ENCODE measurements at regions of chr17 and their contacts with region 1.

Region 1: GRCh38 chr17:42937712-42938596 is 26.3 kb downstream of the AARSD1 start:
- DNase-seq: peak; percentile 69
- H3K4me3 Mint-ChIP-seq: no peak overlapping the region
- H3K27ac Mint-ChIP-seq: no peak overlapping the region
- H3K4me1 Mint-ChIP-seq: no peaks in the 10 kb centered on the region
- H3K27me3 Mint-ChIP-seq: peaks cover 45% of the 10 kb centered on the region
- CTCF ChIP-seq: peak; percentile 80

Region 2: DNA sequence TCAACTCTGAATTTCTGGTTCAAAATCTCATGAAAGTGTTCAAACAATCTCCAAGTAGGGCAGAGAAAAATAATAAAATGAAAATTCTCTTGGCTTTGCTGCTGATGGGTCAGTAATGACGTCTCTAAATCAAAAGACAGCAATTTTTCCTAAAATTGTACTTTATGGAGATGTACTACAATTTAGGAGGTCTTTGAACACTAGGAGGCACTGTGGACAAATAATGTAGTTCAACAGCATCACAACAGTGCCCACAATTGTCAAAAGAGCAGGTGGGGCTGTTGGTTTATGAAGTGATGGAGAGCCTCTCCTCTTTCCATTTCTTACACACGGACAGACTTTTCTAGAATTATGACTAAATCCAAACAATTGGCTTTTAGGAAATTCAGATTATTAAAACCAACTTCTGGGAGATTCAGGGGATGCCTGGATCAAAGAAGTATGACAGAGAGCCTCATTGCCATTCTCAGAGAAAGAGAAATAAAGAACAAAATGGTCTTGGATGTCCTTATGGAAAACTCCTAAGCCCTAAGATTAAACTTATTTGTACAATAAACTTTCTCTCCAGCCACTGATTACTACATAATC is 216.9 kb before region 1 on chr17:
- CTCF ChIA-PET with region 1: interaction called, 3 read pairs
- intact Hi-C with region 1: loop called (anchors 2 kb)
- DNase-seq: peak; percentile 57
- H3K4me3 Mint-ChIP-seq: no peak overlapping the region
- H3K27ac Mint-ChIP-seq: no peak overlapping the region
- H3K4me1 Mint-ChIP-seq: no peaks in the 10 kb centered on the region
- H3K27me3 Mint-ChIP-seq: no peaks in the 10 kb centered on the region
- CTCF ChIP-seq: peak; percentile 61

Region 3: DNA sequence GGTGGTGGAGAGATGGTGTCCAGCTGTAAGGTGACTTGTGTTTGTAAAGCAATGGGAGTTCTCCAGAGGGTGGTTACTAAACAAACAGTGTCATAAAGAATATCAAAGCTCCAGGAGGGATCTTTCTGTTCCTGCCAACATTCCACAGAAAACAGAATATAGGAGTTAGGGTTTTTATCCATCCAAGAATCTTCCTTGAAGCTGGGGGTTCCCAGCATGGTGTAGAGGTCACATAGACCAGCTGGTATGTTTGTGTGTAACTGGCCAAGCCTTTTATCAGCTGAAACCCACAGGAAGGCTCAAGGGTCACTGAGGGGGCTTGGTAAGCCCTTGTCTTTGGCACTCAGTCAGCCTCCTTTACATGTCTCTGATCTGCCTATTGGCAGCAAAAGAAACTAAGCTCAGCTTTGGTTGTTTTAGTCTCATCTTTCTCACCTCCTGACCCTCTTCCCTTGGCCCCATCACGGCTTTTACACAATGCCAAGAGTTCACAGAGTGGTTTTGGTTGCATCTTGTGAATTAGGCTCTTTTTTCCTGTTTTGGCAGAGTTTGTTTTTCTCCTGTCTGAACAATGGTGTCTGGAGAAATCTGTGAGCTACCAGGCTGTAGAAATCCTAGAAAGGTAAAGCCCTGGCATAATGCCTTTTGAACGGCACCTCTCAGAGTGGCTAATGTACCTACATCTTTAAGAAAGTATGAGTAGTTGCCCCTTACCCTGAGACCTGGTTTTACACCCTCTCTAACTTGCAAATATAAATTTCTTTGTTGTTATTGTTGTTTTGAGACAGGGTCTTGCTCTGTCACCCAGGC is 134.7 kb before region 1 on chr17:
- CTCF ChIA-PET with region 1: interaction called, 12 read pairs
- intact Hi-C with region 1: no loop called
- DNase-seq: no peak
- H3K4me3 Mint-ChIP-seq: no peak overlapping the region
- H3K27ac Mint-ChIP-seq: no peak overlapping the region
- H3K4me1 Mint-ChIP-seq: peaks cover 8% of the 10 kb centered on the region
- H3K27me3 Mint-ChIP-seq: peaks cover 17% of the 10 kb centered on the region
- CTCF ChIP-seq: no peak

Region 4: DNA sequence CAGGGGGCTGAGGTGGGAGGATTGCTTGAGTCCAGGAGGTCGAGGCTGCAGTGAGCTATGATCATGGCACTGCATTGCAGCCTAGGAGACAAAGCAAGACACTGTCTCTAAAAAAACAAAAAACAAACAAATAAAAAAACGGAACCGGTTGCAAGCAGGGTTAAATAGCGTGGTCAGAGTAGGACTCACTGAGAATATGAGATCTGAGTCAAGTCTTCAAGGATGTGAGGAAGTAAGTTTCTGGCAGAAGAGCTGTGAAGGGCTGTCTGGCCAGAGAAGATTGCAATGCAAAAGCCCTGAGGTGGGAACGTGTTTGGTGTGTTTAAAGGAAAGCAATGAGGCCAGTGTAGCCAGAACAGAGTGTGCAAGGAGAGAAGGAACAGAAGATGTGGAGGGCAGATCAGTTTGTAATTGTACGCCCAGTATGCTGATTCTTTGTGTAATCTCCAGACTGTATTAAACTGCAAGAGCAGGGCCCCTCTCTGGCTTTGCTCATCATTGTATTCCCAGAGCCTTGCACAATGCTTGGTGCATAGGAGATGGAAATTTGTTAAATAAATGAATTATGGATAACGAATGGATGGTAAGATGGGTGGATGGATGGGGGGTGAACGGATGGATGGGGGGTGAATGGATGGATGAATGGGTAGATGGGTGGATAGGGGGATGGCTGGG is 31.0 kb before region 1 on chr17:
- CTCF ChIA-PET with region 1: no interaction called
- intact Hi-C with region 1: no loop called
- DNase-seq: no peak
- H3K4me3 Mint-ChIP-seq: no peak overlapping the region
- H3K27ac Mint-ChIP-seq: no peak overlapping the region
- H3K4me1 Mint-ChIP-seq: no peaks in the 10 kb centered on the region
- H3K27me3 Mint-ChIP-seq: peaks cover 83% of the 10 kb centered on the region
- CTCF ChIP-seq: no peak

Measured in Calu3 (cell line).